Dendritic cell treated with granulocyte-macrophage colony-stimulating factor and Interleukin-4, amounts not matched to agents 40 ng/mL and 50 ng/mL, for 4 days (primary cell): ENCODE measurements at regions of chr1 and their contacts with region 1.

Region 1: DNA sequence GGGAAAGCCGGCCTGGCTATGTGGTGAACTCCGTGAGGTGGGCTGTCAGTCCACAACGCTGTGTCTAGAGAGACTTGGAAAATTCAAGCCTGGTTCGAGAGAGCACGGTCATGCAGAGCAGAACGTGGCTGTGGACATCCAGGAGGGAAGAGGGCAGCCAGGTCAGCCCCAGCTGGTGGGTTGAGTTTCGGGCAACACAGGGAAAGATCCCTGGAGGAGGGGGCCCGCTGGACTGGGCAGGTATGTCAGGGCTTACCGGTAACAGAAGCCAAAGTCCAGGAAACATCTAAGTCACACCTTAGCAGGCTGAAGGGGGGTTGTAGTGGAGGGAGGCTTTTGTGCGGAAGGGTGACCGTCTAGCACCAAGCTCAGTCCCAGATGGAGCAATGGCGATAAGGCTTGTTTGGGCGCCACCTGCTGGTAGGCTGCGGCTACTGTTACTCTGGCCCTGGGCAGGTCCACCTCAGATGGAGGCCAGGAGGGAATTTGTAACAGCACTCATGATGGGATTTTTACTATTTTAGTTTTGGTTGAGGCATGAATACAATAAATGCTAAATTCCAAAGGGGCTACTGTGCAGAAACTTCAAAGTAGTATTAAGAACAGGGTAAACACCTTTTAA is 143.3 kb upstream of the ZNF644 start:
- H3K4me3 Mint-ChIP-seq: no peak overlapping the region
- H3K27ac Mint-ChIP-seq: peak overlapping the region; percentile 1
- H3K4me1 Mint-ChIP-seq: no peaks in the 10 kb centered on the region
- H3K27me3 Mint-ChIP-seq: peaks cover 16% of the 10 kb centered on the region

Region 2: GRCh38 chr1:90114521-90115141 is 1050.5 kb before region 1 on chr1:
- intact Hi-C with region 1: loop called (anchors 10 kb)
- H3K4me3 Mint-ChIP-seq: no peak overlapping the region
- H3K27ac Mint-ChIP-seq: no peak overlapping the region
- H3K4me1 Mint-ChIP-seq: no peaks in the 10 kb centered on the region
- H3K27me3 Mint-ChIP-seq: peaks cover 16% of the 10 kb centered on the region

Region 3: GRCh38 chr1:90721210-90722194 is 443.6 kb before region 1 on chr1:
- intact Hi-C with region 1: loop called (anchors 1 kb)
- H3K4me3 Mint-ChIP-seq: no peak overlapping the region
- H3K27ac Mint-ChIP-seq: no peak overlapping the region
- H3K4me1 Mint-ChIP-seq: peaks cover 71% of the 10 kb centered on the region
- H3K27me3 Mint-ChIP-seq: peaks cover 95% of the 10 kb centered on the region

Region 4: DNA sequence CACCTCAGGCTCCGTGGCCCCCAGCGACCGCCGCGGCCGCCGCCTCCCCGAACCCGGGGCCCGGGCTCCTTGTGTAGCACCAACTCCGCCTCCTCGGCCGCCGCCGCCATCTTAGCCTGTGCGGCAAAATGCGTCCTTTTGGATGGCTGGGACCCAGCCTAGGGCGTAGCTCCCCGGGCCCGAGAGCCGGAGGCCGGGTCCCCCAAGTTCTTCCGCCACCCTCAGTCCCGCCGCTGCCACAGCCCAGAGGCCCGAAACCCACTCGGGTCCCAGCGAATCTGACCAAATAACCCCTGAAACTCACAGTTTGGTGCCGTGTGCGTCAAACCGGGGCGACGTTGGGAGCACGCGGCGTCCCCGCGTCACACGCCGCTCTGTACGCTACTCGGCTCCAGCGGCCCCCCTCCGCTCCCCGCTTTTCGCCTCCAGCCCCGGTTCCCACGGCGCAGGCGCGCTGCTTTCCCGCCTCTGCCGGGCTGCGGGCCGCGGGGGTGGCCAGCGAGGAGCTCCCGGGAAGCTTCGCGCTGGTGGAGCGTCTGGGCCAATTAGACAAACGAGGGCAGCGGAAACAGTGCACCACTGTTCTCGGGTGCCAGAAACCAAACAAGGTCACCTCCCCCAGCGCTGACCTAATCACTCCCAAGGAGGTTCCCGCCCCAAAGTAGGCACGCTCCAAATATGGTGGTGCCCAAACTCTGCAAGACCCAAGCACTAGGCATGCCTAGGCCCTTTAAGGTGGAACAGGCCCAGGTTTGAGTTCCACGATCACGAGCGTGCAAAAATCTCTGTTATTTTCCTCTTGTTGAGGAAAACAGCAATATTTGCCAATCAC is 143.2 kb before region 1 on chr1 and contains the start of gene ZNF644:
- intact Hi-C with region 1: loop called (anchors 2 kb)
- H3K4me3 Mint-ChIP-seq: peak within 1 kb of the TSS; percentile 89
- H3K27ac Mint-ChIP-seq: peak within 1 kb of the TSS; percentile 99
- H3K4me1 Mint-ChIP-seq: peaks cover 58% of the 10 kb centered on the region
- H3K27me3 Mint-ChIP-seq: no peaks in the 10 kb centered on the region

Region 5: DNA sequence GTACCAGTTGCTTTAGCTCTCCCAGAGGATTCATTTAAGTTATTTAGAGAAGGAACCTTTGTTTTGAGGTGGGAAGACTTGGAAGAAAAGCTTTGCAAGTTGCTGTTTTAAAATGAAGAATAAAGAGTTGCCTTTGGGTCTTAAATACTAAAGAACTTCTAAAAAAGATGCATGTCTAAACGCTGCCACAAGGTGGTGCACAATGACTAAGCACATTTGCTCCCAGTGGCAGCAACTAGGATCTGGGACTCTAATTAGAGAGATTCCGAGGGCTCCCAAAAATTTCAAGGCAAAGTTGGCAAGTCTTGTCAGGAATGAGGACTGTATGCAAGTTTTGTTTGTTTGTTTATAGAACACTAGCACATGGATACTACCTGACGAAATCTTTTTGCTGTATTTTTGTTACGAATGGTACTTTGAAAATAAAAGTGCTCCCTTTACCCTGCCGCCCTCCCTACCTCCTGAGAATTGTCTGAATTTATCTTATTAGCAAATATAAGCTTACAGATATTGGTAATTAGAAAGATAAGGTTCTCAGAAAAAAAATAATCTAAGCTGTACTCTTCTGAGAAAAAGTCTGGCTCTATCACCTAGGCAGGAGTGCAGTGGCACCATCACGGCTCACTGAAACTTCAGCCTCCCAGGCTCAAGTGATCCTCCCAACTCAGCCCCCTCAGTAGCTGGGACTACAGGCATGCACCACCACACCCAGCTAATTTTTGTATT is 117.7 kb after region 1 on chr1:
- intact Hi-C with region 1: loop called (anchors 5 kb)
- H3K4me3 Mint-ChIP-seq: no peak overlapping the region
- H3K27ac Mint-ChIP-seq: no peak overlapping the region
- H3K4me1 Mint-ChIP-seq: no peaks in the 10 kb centered on the region
- H3K27me3 Mint-ChIP-seq: no peaks in the 10 kb centered on the region

Region 6: GRCh38 chr1:91929250-91929649 is 764.1 kb after region 1 on chr1:
- intact Hi-C with region 1: loop called (anchors 5 kb)
- H3K4me3 Mint-ChIP-seq: no peak overlapping the region
- H3K27ac Mint-ChIP-seq: no peak overlapping the region
- H3K4me1 Mint-ChIP-seq: no peaks in the 10 kb centered on the region
- H3K27me3 Mint-ChIP-seq: no peaks in the 10 kb centered on the region